Endothelial cell of umbilical vein (primary cell): ENCODE measurements at regions of chr7 and their contacts with region 1.

Region 1: DNA sequence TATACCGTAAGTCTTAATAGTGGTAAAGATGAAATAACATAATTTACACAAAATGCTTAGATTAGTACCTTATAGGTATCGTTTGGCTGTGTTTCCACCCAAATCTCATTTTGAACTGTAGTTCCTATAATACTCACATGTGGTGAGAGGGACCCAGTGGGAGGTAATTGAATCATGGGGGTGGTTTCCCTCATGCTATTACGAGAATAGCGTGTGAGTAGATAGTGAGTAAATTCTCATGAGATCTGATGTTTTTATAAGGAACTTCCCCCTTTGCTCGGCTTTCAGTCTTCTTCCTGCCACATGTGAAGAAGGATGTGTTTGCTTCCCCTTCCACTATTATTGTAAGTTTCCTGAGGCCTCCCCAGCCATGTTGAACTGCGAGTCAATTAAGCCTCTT is 426.3 kb upstream of the POT1 start:
- DNase-seq: peak; percentile 95
- H3K4me3 ChIP-seq: no peak overlapping the region
- H3K27ac ChIP-seq: peak overlapping the region; percentile 76
- H3K4me1 ChIP-seq: peaks cover 34% of the 10 kb centered on the region
- H3K27me3 ChIP-seq: no peaks in the 10 kb centered on the region
- CTCF ChIP-seq: no peak
- POLR2A ChIP-seq: no peak

Region 2: GRCh38 chr7:125136755-125137547 is 218.9 kb before region 1 on chr7:
- CTCF ChIA-PET with region 1: no interaction called
- POLR2A ChIA-PET with region 1: no interaction called
- dilution Hi-C with region 1: no loop called
- intact Hi-C with region 1: loop called (anchors 5 kb)
- DNase-seq: peak; percentile 88
- H3K4me3 ChIP-seq: peak overlapping the region in 1 of 3 experiments; percentile 42
- H3K27ac ChIP-seq: peak overlapping the region; percentile 76
- H3K4me1 ChIP-seq: peaks cover 21% of the 10 kb centered on the region
- H3K27me3 ChIP-seq: no peaks in the 10 kb centered on the region
- CTCF ChIP-seq: no peak
- POLR2A ChIP-seq: no peak

Region 3: GRCh38 chr7:125173571-125173970 is 182.3 kb before region 1 on chr7:
- CTCF ChIA-PET with region 1: no interaction called
- POLR2A ChIA-PET with region 1: no interaction called
- dilution Hi-C with region 1: no loop called
- intact Hi-C with region 1: no loop called
- DNase-seq: no peak
- H3K4me3 ChIP-seq: no peak overlapping the region
- H3K27ac ChIP-seq: no peak overlapping the region
- H3K4me1 ChIP-seq: no peaks in the 10 kb centered on the region
- H3K27me3 ChIP-seq: no peaks in the 10 kb centered on the region
- CTCF ChIP-seq: no peak
- POLR2A ChIP-seq: no peak

Region 4: DNA sequence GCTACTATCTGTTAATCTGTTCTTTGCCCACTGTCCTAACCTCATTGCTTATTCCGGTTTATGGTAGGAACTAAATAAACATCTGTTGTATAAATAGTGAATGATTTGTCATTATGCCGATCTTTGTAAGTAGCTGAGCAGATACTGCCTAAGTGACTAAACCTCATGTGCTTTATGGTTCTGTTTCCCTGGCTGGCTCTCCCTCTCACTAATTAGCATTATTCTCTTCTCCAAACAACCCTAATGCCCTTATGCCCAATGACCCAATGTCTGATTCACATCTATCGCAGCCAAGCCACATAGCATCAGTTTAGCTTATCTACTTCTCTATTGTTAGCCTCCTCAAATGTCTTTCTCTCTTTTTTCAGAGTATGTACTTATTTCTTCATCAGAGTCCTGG is 36.0 kb after region 1 on chr7:
- CTCF ChIA-PET with region 1: no interaction called
- POLR2A ChIA-PET with region 1: no interaction called
- dilution Hi-C with region 1: no loop called
- intact Hi-C with region 1: loop called (anchors 5 kb)
- DNase-seq: peak; percentile 53
- H3K4me3 ChIP-seq: no peak overlapping the region
- H3K27ac ChIP-seq: no peak overlapping the region
- H3K4me1 ChIP-seq: peaks cover 4% of the 10 kb centered on the region
- H3K27me3 ChIP-seq: no peaks in the 10 kb centered on the region
- CTCF ChIP-seq: no peak
- POLR2A ChIP-seq: no peak

Region 5: GRCh38 chr7:125423458-125424155 is 67.7 kb after region 1 on chr7:
- CTCF ChIA-PET with region 1: no interaction called
- POLR2A ChIA-PET with region 1: no interaction called
- dilution Hi-C with region 1: no loop called
- intact Hi-C with region 1: loop called (anchors 2 kb)
- DNase-seq: peak; percentile 94
- H3K4me3 ChIP-seq: no peak overlapping the region
- H3K27ac ChIP-seq: peak overlapping the region; percentile 52
- H3K4me1 ChIP-seq: peaks cover 21% of the 10 kb centered on the region
- H3K27me3 ChIP-seq: no peaks in the 10 kb centered on the region
- CTCF ChIP-seq: no peak
- POLR2A ChIP-seq: no peak

Region 6: DNA sequence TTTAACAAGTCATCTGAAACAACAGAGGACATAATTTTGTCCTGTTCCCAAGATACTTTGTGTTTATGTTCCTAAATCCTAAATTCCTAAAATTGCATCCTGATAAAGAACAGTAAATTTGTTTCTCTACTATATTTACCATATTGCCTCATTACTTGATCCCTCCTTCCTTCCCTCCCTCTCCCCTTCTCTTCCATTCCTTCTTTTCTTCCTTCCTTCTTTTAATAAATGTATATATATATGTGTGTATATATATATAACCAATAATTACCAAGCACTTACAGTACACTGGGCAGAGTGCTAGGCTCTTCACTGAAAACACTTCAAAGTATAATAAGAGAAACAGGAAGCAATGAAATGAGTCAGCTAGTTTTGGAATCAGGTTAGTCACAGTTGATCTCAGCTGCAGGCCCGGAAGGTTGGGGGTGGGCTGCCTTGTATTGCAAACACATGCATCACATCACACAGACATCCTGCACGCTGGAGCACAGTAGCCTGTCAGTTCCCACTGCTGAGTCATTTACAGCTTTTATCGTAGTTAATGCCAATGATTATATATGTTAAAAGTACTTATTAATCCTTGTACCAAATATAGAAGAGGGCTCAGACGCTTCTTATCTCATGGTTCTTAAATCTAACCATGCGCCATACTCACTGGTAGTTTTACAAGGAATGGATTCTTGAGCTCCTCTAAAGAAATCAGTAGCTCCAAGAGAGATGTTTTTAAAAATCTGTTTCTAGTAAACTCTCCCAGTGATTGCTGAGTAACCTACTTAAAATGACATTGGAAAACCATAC is 1345.1 kb after region 1 on chr7:
- CTCF ChIA-PET with region 1: no interaction called
- POLR2A ChIA-PET with region 1: no interaction called
- dilution Hi-C with region 1: no loop called
- intact Hi-C with region 1: loop called (anchors 10 kb)
- DNase-seq: peak; percentile 98
- H3K4me3 ChIP-seq: peak overlapping the region in 1 of 3 experiments; percentile 26
- H3K27ac ChIP-seq: peak overlapping the region; percentile 89
- H3K4me1 ChIP-seq: peaks cover 21% of the 10 kb centered on the region
- H3K27me3 ChIP-seq: no peaks in the 10 kb centered on the region
- CTCF ChIP-seq: no peak
- POLR2A ChIP-seq: peak; percentile 46